Activated naive CD4-positive, alpha-beta T cell treated with anti-CD3 and anti-CD28 coated beads for 36 hours (primary cell): ENCODE measurements at regions of chr13 and their contacts with region 1.

Region 1: GRCh38 chr13:24254146-24254841 is 55.1 kb upstream of the C1QTNF9 start:
- DNase-seq: peak; percentile 79
- H3K4me3 Mint-ChIP-seq: peak overlapping the region; percentile 87
- H3K27ac Mint-ChIP-seq: peak overlapping the region; percentile 96
- H3K4me1 Mint-ChIP-seq: peaks cover 77% of the 10 kb centered on the region
- H3K27me3 Mint-ChIP-seq: no peaks in the 10 kb centered on the region

Region 2: GRCh38 chr13:24187185-24187584 is 67.1 kb before region 1 on chr13:
- CTCF ChIA-PET with region 1: no interaction called
- intact Hi-C with region 1: no loop called
- DNase-seq: peak; percentile 18
- H3K4me3 Mint-ChIP-seq: no peak overlapping the region
- H3K27ac Mint-ChIP-seq: no peak overlapping the region
- H3K4me1 Mint-ChIP-seq: peaks cover 21% of the 10 kb centered on the region
- H3K27me3 Mint-ChIP-seq: no peaks in the 10 kb centered on the region

Region 3: DNA sequence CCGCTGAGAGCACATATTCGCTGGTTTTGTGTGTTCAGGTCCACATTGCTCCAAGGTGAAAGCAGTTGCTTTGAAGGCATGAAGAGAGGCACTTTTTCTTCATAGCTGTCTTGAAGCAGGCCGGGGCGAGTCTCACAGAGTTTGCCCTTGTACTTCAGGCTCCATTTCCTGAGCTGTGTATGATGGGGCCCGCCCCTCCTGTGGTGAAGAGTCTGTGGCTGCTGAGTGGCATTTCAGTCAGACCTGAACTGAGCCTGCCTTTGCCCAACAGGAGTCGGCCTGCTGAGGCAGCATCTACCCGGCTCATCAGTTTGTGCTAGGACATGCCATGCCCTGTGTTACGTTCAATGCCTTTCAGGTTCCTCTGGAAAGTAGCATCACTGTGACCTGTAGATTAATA is 10.7 kb after region 1 on chr13:
- CTCF ChIA-PET with region 1: interaction called, 25 read pairs
- intact Hi-C with region 1: loop called (anchors 1 kb)
- DNase-seq: peak; percentile 94
- H3K4me3 Mint-ChIP-seq: peak overlapping the region; percentile 68
- H3K27ac Mint-ChIP-seq: peak overlapping the region; percentile 98
- H3K4me1 Mint-ChIP-seq: peaks cover 87% of the 10 kb centered on the region
- H3K27me3 Mint-ChIP-seq: no peaks in the 10 kb centered on the region